ENCODE measurements at regions of chr20 and their contacts with region 1.

Region 1: GRCh38 chr20:44310664-44311639 is at the start of gene FITM2:
- DNase-seq: peak; percentile 71
- H3K4me3 ChIP-seq: peak within 1 kb of the TSS; percentile 94
- CTCF ChIP-seq: peak; percentile 100

Region 2: GRCh38 chr20:44187051-44187762 is 123.7 kb before region 1 on chr20 and contains the start of gene JPH2:
- CTCF ChIA-PET with region 1: interaction called, 10 read pairs
- POLR2A ChIA-PET with region 1: no interaction called
- DNase-seq: no peak
- H3K4me3 ChIP-seq: peak within 1 kb of the TSS; percentile 62
- CTCF ChIP-seq: no peak

Region 3: GRCh38 chr20:44223721-44224120 is 87.2 kb before region 1 on chr20:
- CTCF ChIA-PET with region 1: interaction called, 452 read pairs
- POLR2A ChIA-PET with region 1: no interaction called
- DNase-seq: no peak
- H3K4me3 ChIP-seq: no peak overlapping the region
- CTCF ChIP-seq: no peak

Region 4: GRCh38 chr20:44291754-44292153 is 19.2 kb before region 1 on chr20:
- CTCF ChIA-PET with region 1: interaction called, 17 read pairs
- POLR2A ChIA-PET with region 1: interaction called, 3 read pairs
- DNase-seq: no peak
- H3K4me3 ChIP-seq: no peak overlapping the region
- CTCF ChIP-seq: no peak

Region 5: DNA sequence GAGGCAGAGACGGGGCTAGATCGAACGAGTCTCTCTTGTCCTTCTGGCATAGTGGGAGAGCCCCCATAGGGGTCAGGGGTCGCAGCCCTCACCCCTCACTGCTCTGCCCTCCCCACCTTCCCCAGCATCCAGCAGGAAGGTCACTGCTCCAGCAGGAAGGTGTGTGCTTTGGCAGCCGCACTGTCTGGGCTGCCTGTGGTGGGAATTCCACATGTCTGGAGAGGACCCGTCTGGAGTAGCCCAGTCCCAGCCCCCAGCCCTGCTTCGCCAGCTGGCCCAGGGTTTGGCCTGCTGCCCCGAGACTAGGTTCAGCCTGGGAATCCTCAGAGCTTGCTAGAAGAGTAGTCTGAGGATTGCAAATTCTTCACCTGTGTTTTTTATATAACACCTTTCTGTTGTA is 23.4 kb after region 1 on chr20:
- CTCF ChIA-PET with region 1: interaction called, 67 read pairs
- POLR2A ChIA-PET with region 1: interaction called, 4 read pairs
- DNase-seq: no peak
- H3K4me3 ChIP-seq: no peak overlapping the region
- CTCF ChIP-seq: no peak

Region 6: GRCh38 chr20:44388466-44389023 is 77.6 kb after region 1 on chr20:
- CTCF ChIA-PET with region 1: interaction called, 28 read pairs
- POLR2A ChIA-PET with region 1: no interaction called
- DNase-seq: peak; percentile 7
- H3K4me3 ChIP-seq: no peak overlapping the region
- CTCF ChIP-seq: peak; percentile 90